SK-N-SH (cell line): ENCODE measurements at regions of chr11 and their contacts with region 1.

Region 1: GRCh38 chr11:17354601-17354991 is 3.0 kb downstream of the NCR3LG1 start:
- DNase-seq: peak; percentile 71
- H3K4me3 ChIP-seq: peak overlapping the region in 1 of 2 experiments; percentile 77; a peak in 1 of 4 replicates
- H3K27ac ChIP-seq: no peak overlapping the region
- H3K4me1 ChIP-seq: peaks cover 5 to 14% of the 10 kb centered on the region in 2 experiments; a peak in 3 of 4 replicates
- H3K27me3 ChIP-seq: no peaks in the 10 kb centered on the region
- CTCF ChIP-seq: peak; percentile 76
- EP300 ChIP-seq: no peak
- RAD21 ChIP-seq: peak; percentile 42

Region 2: GRCh38 chr11:17333799-17334586 is 20.6 kb before region 1 on chr11:
- CTCF ChIA-PET with region 1: interaction called, 10 read pairs
- POLR2A ChIA-PET with region 1: interaction called, 3 read pairs
- DNase-seq: no peak
- H3K4me3 ChIP-seq: no peak overlapping the region
- H3K27ac ChIP-seq: no peak overlapping the region
- H3K4me1 ChIP-seq: no peaks in the 10 kb centered on the region
- H3K27me3 ChIP-seq: no peaks in the 10 kb centered on the region
- CTCF ChIP-seq: no peak
- EP300 ChIP-seq: no peak
- RAD21 ChIP-seq: no peak

Region 3: DNA sequence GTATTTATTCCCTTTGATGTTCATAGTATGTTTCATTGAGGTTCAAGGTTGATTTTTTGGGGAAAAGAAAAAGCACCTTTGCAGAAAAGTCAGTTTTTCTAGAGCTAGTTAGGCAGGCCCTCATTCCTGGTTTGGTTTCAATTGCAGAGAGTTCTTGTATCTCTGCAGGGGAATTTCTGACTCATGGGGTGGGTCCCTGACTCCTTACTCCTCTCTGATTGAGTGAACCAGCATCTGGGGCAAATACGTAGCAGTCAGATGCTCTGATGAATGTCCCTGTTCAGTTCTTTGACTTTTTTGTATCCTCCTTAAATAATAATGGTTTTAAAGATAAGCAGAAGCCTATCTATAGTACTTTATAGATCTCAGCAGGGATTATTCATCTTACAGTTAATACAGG is 10.7 kb before region 1 on chr11:
- CTCF ChIA-PET with region 1: interaction called, 13 read pairs
- POLR2A ChIA-PET with region 1: no interaction called
- DNase-seq: no peak
- H3K4me3 ChIP-seq: no peak overlapping the region
- H3K27ac ChIP-seq: peak overlapping the region in 1 of 2 experiments; percentile 23; a peak in 2 of 4 replicates
- H3K4me1 ChIP-seq: no peaks in the 10 kb centered on the region
- H3K27me3 ChIP-seq: no peaks in the 10 kb centered on the region
- CTCF ChIP-seq: no peak
- EP300 ChIP-seq: no peak
- RAD21 ChIP-seq: no peak

Region 4: DNA sequence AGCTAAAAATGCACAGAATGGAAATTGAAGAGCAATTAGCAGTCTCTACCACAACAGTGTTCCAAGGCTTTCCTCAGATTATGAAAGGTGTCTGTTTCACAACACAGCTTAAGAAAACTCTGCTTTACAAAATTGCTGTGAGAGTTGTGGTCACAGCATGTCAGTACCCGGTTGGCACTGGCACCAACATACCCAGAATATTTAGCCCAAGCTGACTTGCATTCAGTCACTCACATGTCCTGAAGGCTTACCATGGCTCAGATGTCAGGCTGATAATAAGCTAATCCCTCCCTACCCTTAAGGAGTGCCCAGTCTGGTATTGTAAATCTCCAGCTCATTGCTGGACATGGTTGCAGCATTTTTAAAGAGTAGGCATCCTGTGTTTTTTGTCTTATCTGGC is 11.9 kb after region 1 on chr11:
- CTCF ChIA-PET with region 1: interaction called, 32 read pairs
- POLR2A ChIA-PET with region 1: no interaction called
- DNase-seq: no peak
- H3K4me3 ChIP-seq: no peak overlapping the region
- H3K27ac ChIP-seq: no peak overlapping the region
- H3K4me1 ChIP-seq: no peaks in the 10 kb centered on the region
- H3K27me3 ChIP-seq: no peaks in the 10 kb centered on the region
- CTCF ChIP-seq: no peak
- EP300 ChIP-seq: no peak
- RAD21 ChIP-seq: no peak